ENCODE measurements at regions of chr12 and their contacts with region 1.

Region 1: GRCh38 chr12:66107451-66107915 is 23.1 kb downstream of the LLPH start:
- DNase-seq: peak; percentile 98
- H3K4me3 Mint-ChIP-seq: no peak overlapping the region
- H3K27ac Mint-ChIP-seq: no peak overlapping the region
- H3K4me1 Mint-ChIP-seq: peaks cover 16% of the 10 kb centered on the region
- H3K27me3 Mint-ChIP-seq: no peaks in the 10 kb centered on the region
- CTCF ChIP-seq: peak; percentile 62

Region 2: DNA sequence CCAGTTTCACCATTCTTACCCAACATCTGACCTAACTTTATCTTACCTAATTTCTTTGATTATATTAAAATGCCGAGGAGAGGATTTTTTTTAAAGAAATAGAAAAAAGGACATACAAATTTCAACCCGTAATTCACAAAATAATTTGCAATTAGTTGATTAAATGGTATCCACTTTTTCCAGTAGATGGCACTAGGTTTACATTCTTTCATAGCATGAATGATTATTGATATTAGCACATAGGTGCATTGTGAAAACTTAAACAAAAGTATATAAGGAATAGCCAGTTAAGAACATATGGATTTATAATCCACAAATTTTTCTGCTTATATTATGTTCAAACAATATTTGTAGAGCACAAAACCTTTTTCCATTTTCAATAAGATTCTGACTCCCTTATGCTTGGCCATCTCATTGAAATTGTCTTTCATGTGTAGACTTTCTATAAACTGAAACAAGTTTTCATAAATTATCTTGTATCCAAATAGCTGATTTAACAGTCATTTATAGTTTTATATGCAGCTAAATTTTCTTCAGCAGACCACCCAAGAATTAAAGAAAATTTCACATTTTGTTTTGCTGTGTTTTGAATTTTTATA is 793.7 kb before region 1 on chr12:
- CTCF ChIA-PET with region 1: interaction called, 11 read pairs
- POLR2A ChIA-PET with region 1: no interaction called
- intact Hi-C with region 1: loop called (anchors 1 kb)
- DNase-seq: peak; percentile 52
- H3K4me3 Mint-ChIP-seq: no peak overlapping the region
- H3K27ac Mint-ChIP-seq: no peak overlapping the region
- H3K4me1 Mint-ChIP-seq: peaks cover 12% of the 10 kb centered on the region
- H3K27me3 Mint-ChIP-seq: no peaks in the 10 kb centered on the region
- CTCF ChIP-seq: peak; percentile 66

Region 3: DNA sequence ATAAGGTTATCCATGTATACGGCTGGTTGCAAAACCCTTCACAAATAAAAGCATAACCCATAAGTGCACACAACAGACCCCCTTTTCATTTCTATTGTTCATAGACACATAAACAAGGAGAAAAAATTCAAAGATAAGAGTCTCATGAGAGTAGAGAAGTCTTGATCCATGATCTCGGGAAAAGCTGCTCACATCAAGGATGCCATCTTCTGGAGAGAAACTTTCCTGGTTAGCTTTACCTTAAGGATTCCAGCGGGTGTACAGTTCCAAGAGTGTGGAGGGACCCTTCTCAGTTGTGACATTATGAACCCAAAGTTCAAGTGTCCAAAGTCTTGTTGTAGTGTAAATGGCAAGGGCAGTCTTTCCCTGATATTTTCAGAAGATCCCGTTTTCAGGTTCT is 121.4 kb before region 1 on chr12:
- CTCF ChIA-PET with region 1: interaction called, 3 read pairs
- POLR2A ChIA-PET with region 1: no interaction called
- intact Hi-C with region 1: loop called (anchors 2 kb)
- DNase-seq: no peak
- H3K4me3 Mint-ChIP-seq: no peak overlapping the region
- H3K27ac Mint-ChIP-seq: no peak overlapping the region
- H3K4me1 Mint-ChIP-seq: peaks cover 5% of the 10 kb centered on the region
- H3K27me3 Mint-ChIP-seq: no peaks in the 10 kb centered on the region
- CTCF ChIP-seq: no peak

Region 4: GRCh38 chr12:66119870-66120241 is 12.4 kb after region 1 on chr12:
- CTCF ChIA-PET with region 1: interaction called, 27 read pairs
- POLR2A ChIA-PET with region 1: interaction called, 4 read pairs
- intact Hi-C with region 1: no loop called
- DNase-seq: no peak
- H3K4me3 Mint-ChIP-seq: no peak overlapping the region
- H3K27ac Mint-ChIP-seq: no peak overlapping the region
- H3K4me1 Mint-ChIP-seq: peaks cover under 1% of the 10 kb centered on the region
- H3K27me3 Mint-ChIP-seq: no peaks in the 10 kb centered on the region
- CTCF ChIP-seq: no peak

Measured in MCF 10A (cell line).